ENCODE measurements at regions of chr2 and their contacts with region 1.

Region 1: GRCh38 chr2:72862239-72862988 is 24.8 kb upstream of the SPR start:
- DNase-seq: peak; percentile 80
- H3K4me3 Mint-ChIP-seq: peak overlapping the region; percentile 54
- H3K27ac Mint-ChIP-seq: no peak overlapping the region
- H3K4me1 Mint-ChIP-seq: peaks cover 15% of the 10 kb centered on the region
- H3K27me3 Mint-ChIP-seq: peaks cover 29% of the 10 kb centered on the region

Region 2: DNA sequence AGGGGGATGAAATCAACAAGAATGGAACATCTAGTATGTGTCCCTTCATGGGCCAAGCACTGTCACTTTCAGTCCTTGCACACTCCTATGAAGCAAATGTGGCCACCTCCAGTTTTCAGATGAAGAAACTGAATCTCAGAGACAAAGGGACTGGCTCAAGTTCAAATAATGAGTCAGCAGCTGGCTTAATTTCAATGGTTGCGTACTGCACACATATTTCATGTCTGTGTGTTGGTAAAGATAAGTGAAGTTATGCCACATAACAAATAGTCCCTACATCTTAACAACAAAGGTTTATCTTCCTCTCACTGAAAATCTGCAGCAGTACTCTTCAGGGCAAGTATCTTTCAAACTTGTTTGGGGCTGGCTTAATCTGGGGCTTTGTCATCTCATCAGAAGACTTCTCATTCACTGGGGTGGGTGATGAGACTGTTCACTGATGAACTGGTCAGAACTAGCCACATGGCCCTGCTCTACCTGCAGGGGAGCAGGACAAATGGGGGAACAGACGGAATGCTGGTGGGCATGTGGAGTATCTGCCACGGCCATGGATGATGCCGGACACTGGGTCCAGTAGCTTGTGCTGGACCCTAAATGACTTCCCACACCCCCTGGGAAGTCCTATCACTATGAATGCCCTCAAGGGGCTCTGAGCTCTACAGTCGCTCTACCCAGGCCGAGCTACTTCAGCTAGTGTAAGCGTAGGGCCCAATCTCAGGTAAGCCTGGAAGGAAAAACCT is 977.9 kb before region 1 on chr2:
- intact Hi-C with region 1: no loop called
- DNase-seq: no peak
- H3K4me3 Mint-ChIP-seq: no peak overlapping the region
- H3K27ac Mint-ChIP-seq: no peak overlapping the region
- H3K4me1 Mint-ChIP-seq: no peaks in the 10 kb centered on the region
- H3K27me3 Mint-ChIP-seq: no peaks in the 10 kb centered on the region

Region 3: GRCh38 chr2:71923887-71924533 is 938.4 kb before region 1 on chr2:
- intact Hi-C with region 1: loop called (anchors 10 kb)
- DNase-seq: peak; percentile 17
- H3K4me3 Mint-ChIP-seq: no peak overlapping the region
- H3K27ac Mint-ChIP-seq: no peak overlapping the region
- H3K4me1 Mint-ChIP-seq: no peaks in the 10 kb centered on the region
- H3K27me3 Mint-ChIP-seq: no peaks in the 10 kb centered on the region

Region 4: DNA sequence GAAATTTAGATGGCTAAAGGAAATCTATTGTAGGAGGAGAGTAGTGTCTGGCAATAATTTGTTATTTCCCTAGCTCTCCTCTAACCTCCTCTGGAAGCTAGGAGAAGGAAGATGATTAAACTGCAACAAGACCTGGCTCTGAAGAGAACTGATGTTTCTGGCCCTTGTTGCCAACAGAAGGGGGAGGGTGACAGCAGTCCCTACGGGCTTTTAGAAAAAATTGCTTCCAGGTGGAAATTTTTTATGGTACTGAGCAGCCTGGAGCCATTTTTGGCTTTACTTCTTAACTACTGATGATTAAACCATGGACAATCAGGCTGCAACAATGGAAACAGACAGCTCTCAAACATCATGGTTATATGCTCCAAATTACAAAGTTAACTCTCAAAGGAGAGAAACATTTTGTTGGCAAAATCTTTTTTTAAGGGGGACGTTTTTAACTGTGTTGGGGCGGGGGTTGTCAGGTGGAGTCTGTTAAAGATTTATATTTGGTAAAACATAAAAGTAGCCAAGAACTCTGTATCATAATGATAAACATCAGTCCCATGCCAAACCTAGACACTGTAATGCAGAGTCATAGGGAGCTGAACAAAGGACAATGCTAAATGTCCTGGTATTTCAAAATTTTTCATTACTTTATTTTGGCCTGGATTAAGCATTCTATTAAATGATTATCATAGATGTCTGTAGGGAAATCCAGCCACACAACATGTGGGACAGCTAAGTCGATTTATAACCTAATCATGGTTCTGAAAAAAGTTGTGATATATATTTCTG is 106.6 kb before region 1 on chr2:
- intact Hi-C with region 1: no loop called
- DNase-seq: no peak
- H3K4me3 Mint-ChIP-seq: no peak overlapping the region
- H3K27ac Mint-ChIP-seq: no peak overlapping the region
- H3K4me1 Mint-ChIP-seq: no peaks in the 10 kb centered on the region
- H3K27me3 Mint-ChIP-seq: peaks cover 2% of the 10 kb centered on the region

Region 5: DNA sequence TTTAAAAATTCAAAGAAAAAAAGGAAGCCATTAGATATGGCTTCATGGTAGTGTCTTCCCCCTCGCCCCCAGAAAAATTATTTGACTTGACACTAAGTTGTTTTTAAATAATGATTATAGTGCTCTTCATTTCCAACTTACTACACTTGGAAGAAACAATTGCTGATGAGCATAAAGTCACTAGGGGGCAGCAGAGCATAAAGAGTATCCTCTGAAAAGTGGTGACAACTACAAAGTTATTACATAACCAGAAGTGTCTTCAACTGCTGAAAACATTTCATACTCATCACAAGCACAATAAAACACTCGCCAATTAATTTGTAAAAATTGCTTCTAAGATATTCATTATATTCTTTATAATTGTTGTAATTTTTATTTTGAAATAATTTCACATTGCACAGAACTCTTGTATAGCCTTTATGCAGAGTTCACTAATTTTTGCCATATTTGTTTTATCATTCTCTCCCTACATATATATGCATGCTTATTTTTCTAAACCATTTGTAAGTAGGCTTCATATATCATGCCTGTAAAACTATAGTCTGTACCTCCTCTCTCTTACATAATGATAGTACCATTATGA is 91.4 kb before region 1 on chr2:
- intact Hi-C with region 1: loop called (anchors 1 kb)
- DNase-seq: peak; percentile 45
- H3K4me3 Mint-ChIP-seq: no peak overlapping the region
- H3K27ac Mint-ChIP-seq: no peak overlapping the region
- H3K4me1 Mint-ChIP-seq: no peaks in the 10 kb centered on the region
- H3K27me3 Mint-ChIP-seq: no peaks in the 10 kb centered on the region

Region 6: DNA sequence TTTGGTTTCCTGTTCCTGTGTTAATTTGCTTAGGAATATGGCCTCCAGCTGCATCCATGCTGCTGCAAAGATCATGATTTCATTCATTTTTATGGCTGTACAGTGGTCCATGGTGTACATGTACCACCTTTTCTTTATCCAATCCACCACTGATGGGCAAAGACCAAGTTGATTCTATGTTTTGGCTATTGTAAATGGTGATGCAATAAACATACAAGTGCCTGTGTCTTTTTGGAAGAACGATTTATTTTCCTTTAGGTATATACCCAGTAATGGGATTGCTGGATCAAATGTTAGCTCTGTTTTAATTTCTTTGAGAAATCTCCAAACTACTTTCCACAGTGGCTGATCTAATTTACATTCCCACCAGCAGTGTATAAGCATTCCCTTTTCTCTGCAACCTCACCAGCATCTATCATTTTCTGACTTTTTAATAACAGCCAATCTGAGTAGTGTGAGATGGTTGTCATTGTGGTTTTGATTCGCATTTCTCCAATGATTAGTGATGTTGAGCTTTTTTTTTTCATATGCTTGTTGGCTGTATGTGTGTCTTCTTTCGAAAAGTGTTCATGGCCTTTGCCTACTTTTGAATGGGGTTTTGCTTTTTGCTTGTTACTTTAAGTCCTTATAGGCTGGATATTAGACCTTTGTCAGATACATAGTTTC is 56.0 kb before region 1 on chr2:
- intact Hi-C with region 1: loop called (anchors 1 kb)
- DNase-seq: no peak
- H3K4me3 Mint-ChIP-seq: no peak overlapping the region
- H3K27ac Mint-ChIP-seq: no peak overlapping the region
- H3K4me1 Mint-ChIP-seq: no peaks in the 10 kb centered on the region
- H3K27me3 Mint-ChIP-seq: no peaks in the 10 kb centered on the region

Region 7: GRCh38 chr2:72825241-72826155 is 36.9 kb before region 1 on chr2 and contains the start of gene EXOC6B:
- intact Hi-C with region 1: loop called (anchors 1 kb)
- DNase-seq: peak; percentile 79
- H3K4me3 Mint-ChIP-seq: peak within 1 kb of the TSS; percentile 93
- H3K27ac Mint-ChIP-seq: peak within 1 kb of the TSS; percentile 69
- H3K4me1 Mint-ChIP-seq: peaks cover 43% of the 10 kb centered on the region
- H3K27me3 Mint-ChIP-seq: peaks cover 5% of the 10 kb centered on the region
- total RNA-seq, gene EXOC6B: 6.8 and 7.7 TPM in 2 replicates

Region 8: DNA sequence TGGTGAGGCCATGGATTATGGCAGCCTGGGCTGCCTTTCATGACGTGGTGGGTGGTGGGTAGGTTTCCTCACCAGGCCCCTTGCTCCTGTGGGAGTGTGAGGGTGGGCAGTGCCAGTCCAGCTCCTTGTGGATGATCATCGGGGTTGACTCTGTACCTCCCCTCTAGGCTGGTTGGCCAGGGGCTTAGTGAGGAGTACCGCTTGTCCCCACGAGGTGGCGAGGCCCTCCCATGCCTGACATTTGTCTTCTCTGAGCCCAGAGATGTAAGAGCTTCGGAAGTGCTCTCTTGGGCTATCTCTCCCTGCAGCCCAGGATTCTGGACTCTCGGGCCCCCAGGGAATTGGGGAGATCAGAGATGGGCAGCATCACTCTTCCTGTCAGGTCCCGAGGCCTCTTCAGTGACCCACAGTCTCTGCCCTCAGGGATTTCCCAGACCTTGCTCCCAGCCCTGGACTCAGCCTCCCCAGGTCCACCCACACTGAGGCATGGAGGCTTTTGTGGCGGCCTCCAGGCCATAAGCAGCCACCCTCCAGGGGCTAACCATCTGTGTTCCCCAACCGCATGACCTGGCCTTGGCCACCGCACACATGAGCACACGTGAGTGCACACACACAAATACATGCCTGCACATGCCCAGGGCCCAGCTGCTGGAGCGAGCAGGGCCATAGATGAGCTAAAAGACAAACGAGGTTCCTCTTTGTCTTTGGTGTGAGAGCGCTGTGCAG is 31.3 kb after region 1 on chr2:
- intact Hi-C with region 1: no loop called
- DNase-seq: peak; percentile 16
- H3K4me3 Mint-ChIP-seq: no peak overlapping the region
- H3K27ac Mint-ChIP-seq: no peak overlapping the region
- H3K4me1 Mint-ChIP-seq: no peaks in the 10 kb centered on the region
- H3K27me3 Mint-ChIP-seq: peaks cover 23% of the 10 kb centered on the region

Region 9: GRCh38 chr2:72915907-72916742 is 53.7 kb after region 1 on chr2:
- intact Hi-C with region 1: loop called (anchors 1 kb)
- DNase-seq: no peak
- H3K4me3 Mint-ChIP-seq: no peak overlapping the region
- H3K27ac Mint-ChIP-seq: no peak overlapping the region
- H3K4me1 Mint-ChIP-seq: peaks cover 18% of the 10 kb centered on the region
- H3K27me3 Mint-ChIP-seq: peaks cover 68% of the 10 kb centered on the region

Region 10: DNA sequence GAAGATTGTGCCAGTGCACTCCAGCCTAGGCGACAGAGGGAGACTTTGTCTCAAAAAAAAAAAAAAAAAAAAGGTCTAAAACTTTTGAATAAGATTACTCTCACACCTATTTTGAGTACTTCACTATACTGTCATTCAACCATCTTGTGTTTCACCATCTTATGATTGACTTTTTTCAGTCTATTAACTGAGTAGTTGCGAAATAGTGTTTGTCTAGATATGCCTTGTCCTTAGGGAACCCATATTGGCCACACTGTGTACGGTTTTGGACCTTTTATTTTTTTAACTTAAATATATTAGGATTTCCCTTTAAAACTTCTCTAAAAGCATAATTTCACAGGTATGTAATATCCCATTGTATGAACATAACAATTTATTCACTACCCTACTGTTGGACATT is 595.6 kb after region 1 on chr2:
- intact Hi-C with region 1: no loop called
- DNase-seq: no peak
- H3K4me3 Mint-ChIP-seq: no peak overlapping the region
- H3K27ac Mint-ChIP-seq: no peak overlapping the region
- H3K4me1 Mint-ChIP-seq: no peaks in the 10 kb centered on the region
- H3K27me3 Mint-ChIP-seq: no peaks in the 10 kb centered on the region

Measured in activated T-helper 1 cell treated with anti-CD3 and anti-CD28 coated beads, Interleukin-12 subunit alpha, Interleukin-12 subunit beta, Interleukin-2, Interleukin-4 antibody, amounts not matched to agents 30 ng/mL and 10 ng/mL and 1 ng/mL, durations not matched to agents 14 hours and 24 hours and 36 hours (primary cell).